Sciatic nerve (tissue), 2 donors: ENCODE measurements at regions of chr10 and their contacts with region 1.

Region 1: GRCh38 chr10:104353325-104354048 is at the start of gene CFAP58:
- DNase-seq: peak; percentile 96
- ATAC-seq: peak; percentile 94
- total RNA-seq, gene CFAP58: 0.67 TPM

Region 2: GRCh38 chr10:104291439-104291951 is 62.0 kb before region 1 on chr10:
- intact Hi-C with region 1: loop called (anchors 5 kb)
- DNase-seq: peak; percentile 93
- ATAC-seq: peak; percentile 97

Region 3: DNA sequence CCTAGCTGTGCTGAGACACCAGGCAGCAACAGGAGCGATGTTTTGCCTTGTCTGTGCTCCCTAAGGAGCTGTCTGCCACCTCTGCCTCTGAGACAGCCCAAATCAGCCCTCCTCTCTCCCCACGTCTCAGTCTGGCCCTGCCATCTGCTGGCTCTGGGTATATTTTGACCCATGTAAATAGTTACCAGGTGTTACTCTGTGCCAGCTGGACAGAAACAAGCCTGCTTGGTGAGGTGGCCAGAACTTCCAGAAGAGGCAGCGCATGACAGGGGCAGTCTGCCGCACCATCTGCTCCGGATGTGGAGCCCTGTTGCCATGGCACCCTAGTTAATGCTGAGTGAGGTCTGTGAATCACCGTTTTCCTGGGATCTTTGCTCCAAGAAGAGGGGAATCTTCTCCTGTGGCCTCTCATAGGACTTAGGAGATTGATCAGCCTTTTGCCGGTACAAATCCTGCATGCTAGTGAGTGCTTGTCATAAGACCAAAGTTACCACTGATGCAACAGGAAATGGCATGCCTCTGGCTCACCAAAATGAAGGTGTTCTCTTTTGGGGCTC is 52.7 kb before region 1 on chr10:
- intact Hi-C with region 1: loop called (anchors 5 kb)
- DNase-seq: no peak
- ATAC-seq: peak; percentile 33

Region 4: GRCh38 chr10:104309976-104310674 is 43.4 kb before region 1 on chr10:
- intact Hi-C with region 1: loop called (anchors 5 kb)
- DNase-seq: peak; percentile 77
- ATAC-seq: peak; percentile 89